Right ventricle myocardium inferior (tissue), 1 donor: ENCODE measurements at regions of chr1 and their contacts with region 1.

Region 1: DNA sequence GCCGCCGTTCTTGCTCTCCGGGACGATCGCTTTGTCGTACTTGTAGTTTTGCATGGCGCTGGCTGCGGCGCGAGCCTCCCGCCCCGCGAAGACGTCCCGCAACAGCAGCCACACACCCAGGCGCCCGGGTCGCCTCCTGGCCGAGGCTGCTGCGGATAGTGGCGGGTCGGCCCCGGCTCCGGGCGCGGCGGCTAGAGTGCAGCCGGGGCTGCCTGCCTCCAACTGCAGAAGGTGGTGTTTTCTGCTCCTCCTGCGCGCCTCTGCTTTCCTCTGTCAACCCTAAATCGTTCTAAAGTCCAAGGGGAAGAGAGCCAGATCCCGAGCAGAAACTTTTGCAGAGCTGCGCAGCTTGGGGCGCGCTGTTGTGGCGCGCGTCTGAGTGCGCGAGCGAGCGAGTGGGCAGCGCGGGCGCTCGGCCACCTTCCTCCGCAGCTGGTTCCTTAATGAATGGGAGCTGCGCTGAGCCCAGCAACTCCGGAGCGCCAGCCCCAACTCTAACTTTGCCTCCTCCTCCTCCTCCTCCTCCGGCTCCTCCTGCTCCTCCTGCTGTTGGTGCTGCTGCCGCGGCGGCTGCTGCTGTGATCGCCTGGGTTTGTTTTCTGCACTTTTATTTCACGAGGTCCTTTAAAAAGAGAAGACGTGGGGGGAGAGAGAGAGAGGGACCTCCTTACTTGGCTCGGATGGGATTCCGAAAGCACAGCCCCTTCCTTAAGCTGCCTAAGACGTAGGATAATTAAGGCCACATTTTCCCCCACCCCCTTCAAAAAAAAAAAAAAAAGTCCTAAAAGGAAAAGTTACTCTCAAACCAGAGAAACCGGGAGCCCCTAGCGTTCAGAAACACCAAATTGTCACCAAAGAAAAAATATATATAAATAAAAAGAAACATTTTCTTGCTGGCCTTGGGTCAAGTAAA is at the start of gene PLPP3:
- DNase-seq: peak; percentile 92
- ATAC-seq: peak; percentile 91
- total RNA-seq, gene PLPP3: 143 TPM

Region 2: DNA sequence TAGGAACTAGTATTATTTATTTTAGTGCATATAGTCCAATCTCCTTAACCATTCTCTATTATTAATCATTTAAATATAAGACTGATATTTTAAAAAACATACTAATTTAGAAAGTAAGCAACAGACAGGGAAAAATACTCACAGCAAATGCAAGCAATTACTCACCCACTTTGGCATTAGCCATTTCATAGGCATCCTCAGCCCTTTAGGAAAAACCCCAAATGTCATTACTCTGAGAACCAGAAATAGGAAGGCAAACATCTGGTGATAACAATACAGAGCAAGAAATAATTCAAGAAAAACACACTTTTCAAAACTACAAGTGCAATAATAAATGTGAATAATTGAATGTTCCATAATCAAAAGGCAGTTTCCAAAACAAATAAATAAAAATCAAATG is 545.0 kb before region 1 on chr1:
- intact Hi-C with region 1: no loop called
- DNase-seq: no peak
- ATAC-seq: no peak

Region 3: GRCh38 chr1:56064705-56065104 is 514.5 kb before region 1 on chr1:
- intact Hi-C with region 1: loop called (anchors 10 kb)
- DNase-seq: no peak
- ATAC-seq: peak; percentile 62

Region 4: GRCh38 chr1:56301847-56302246 is 277.4 kb before region 1 on chr1:
- intact Hi-C with region 1: loop called (anchors 5 kb)
- DNase-seq: no peak
- ATAC-seq: no peak

Region 5: GRCh38 chr1:56411484-56412180 is 167.6 kb before region 1 on chr1:
- intact Hi-C with region 1: loop called (anchors 5 kb)
- DNase-seq: no peak
- ATAC-seq: no peak

Region 6: GRCh38 chr1:56508523-56508983 is 70.7 kb before region 1 on chr1:
- intact Hi-C with region 1: loop called (anchors 2 kb)
- DNase-seq: peak; percentile 84
- ATAC-seq: peak; percentile 84